Esophagus muscularis mucosa (tissue), 4 donors: ENCODE measurements at regions of chr17 and their contacts with region 1.

Region 1: GRCh38 chr17:8288336-8289102 is at the start of gene RANGRF:
- DNase-seq: peak; percentile 97
- H3K4me3 ChIP-seq: peak within 1 kb of the TSS; percentile 68 to 86 (median 71)
- H3K27ac ChIP-seq: peak within 1 kb of the TSS; percentile 85 to 95 (median 91)
- H3K4me1 ChIP-seq: peaks cover 14 to 28% (median 20%) of the 10 kb centered on the region in 4 donors
- H3K27me3 ChIP-seq: no peaks in the 10 kb centered on the region
- CTCF ChIP-seq: no peak
- EP300 ChIP-seq: no peak
- POLR2A ChIP-seq: no peak
- total RNA-seq, gene RANGRF: 26.5 to 43.6 (median 34.4) TPM

Region 2: GRCh38 chr17:8209909-8210760 is 78.4 kb before region 1 on chr17 and contains the start of gene AURKB:
- intact Hi-C with region 1: loop called (anchors 10 kb)
- DNase-seq: peak; percentile 98
- H3K4me3 ChIP-seq: peak within 1 kb of the TSS; percentile 55 to 65 (median 62)
- H3K27ac ChIP-seq: peak within 1 kb of the TSS; percentile 84 to 86 (median 86)
- H3K4me1 ChIP-seq: peaks cover 10 to 16% (median 14%) of the 10 kb centered on the region in 4 donors
- H3K27me3 ChIP-seq: no peaks in the 10 kb centered on the region
- CTCF ChIP-seq: no peak
- EP300 ChIP-seq: no peak
- POLR2A ChIP-seq: no peak
- total RNA-seq, gene AURKB: 1.5 TPM in 1 of 4 donors, not detected in the others

Region 3: GRCh38 chr17:8248751-8249607 is 39.5 kb before region 1 on chr17 and contains the start of gene PFAS:
- intact Hi-C with region 1: loop called (anchors 5 kb)
- DNase-seq: peak; percentile 99
- H3K4me3 ChIP-seq: peak within 1 kb of the TSS; percentile 70 to 89 (median 72)
- H3K27ac ChIP-seq: peak within 1 kb of the TSS; percentile 97 to 99 (median 98)
- H3K4me1 ChIP-seq: peaks cover 13 to 33% (median 26%) of the 10 kb centered on the region in 4 donors
- H3K27me3 ChIP-seq: no peaks in the 10 kb centered on the region
- CTCF ChIP-seq: peak in 1 of 3 experiments; percentile 5
- EP300 ChIP-seq: no peak
- POLR2A ChIP-seq: peak; percentile 8
- total RNA-seq, gene PFAS: 8.8 to 15.2 (median 11.2) TPM

Region 4: DNA sequence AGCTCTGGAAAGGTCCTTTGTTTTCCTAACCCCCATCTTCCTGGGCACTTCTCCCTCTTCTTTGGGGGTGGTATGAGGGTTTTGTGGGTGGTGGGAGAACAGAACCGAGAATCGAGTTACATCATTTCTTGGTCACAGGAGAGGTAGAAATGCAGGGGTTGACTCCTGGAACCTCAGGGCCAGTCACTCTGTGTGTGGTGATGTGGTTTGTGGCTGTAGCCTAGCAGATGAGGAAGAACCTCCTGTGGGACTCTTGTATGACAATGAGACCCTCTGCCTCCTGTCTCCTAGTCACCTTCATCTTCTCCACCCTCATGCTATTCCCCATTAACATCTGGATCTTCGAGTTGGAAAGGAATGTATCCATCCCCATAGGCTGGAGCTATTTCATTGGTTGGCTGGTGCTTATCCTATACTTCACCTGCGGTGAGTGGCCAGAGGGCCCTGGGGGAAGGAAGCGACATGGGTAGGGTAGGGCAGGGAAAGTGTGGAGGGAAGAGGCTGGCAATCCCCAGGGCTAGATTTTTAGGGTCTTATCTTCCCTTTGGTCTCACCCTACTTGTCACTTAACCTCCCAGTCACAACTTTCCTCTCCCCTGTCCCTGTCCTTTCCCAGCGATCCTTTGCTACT is 56.6 kb after region 1 on chr17:
- intact Hi-C with region 1: no loop called
- DNase-seq: no peak
- H3K4me3 ChIP-seq: no peak overlapping the region
- H3K27ac ChIP-seq: no peak overlapping the region
- H3K4me1 ChIP-seq: peaks cover 0 to 5% (median 0%) of the 10 kb centered on the region in 4 donors
- H3K27me3 ChIP-seq: peaks cover 0 to 27% (median 0%) of the 10 kb centered on the region in 4 donors
- CTCF ChIP-seq: no peak
- EP300 ChIP-seq: no peak
- POLR2A ChIP-seq: no peak